ENCODE measurements at regions of chr7 and their contacts with region 1.

Region 1: GRCh38 chr7:108874852-108875538 is 305.3 kb downstream of the DNAJB9 start:
- DNase-seq: peak; percentile 41
- ATAC-seq: no peak
- H3K4me3 ChIP-seq: no peak overlapping the region
- H3K27ac ChIP-seq: no peak overlapping the region
- H3K4me1 ChIP-seq: no peaks in the 10 kb centered on the region
- H3K27me3 ChIP-seq: no peaks in the 10 kb centered on the region
- CTCF ChIP-seq: peak; percentile 55

Region 2: DNA sequence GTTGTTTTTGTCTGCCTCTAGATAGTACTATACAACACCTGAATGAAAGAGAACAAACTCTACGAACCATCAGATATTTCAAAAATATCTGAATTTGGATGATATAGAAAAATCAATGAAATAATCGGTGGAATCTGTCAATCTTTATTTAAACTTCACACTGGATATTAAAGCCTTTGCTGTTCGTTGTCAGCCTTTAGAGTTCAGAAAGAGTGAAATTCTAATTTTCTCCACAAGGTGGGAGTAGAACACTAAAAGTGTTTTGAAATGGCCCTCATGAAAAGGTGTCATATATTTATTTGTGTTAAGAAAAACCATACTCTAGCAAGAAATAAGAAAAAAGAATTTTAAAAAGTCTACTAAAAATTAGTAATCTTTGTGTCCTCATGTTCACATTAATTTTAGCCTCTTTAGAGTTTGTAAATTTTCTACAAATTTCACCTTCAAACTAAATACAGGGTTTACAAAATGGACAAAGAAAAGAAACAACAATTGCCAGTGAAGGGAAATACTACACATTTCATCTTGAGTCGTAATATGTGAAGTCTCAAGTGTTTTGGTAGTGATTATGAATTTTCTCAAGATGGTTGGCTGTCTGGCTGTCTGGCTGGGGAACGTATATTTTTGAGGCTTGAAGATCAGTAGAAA is 261.8 kb before region 1 on chr7:
- CTCF ChIA-PET with region 1: no interaction called
- POLR2A ChIA-PET with region 1: no interaction called
- intact Hi-C with region 1: loop called (anchors 5 kb)
- DNase-seq: peak; percentile 78
- ATAC-seq: peak; percentile 64
- H3K4me3 ChIP-seq: no peak overlapping the region
- H3K27ac ChIP-seq: no peak overlapping the region
- H3K4me1 ChIP-seq: peaks cover 15% of the 10 kb centered on the region
- H3K27me3 ChIP-seq: no peaks in the 10 kb centered on the region
- CTCF ChIP-seq: peak; percentile 80